Endothelial cell of umbilical vein (primary cell): ENCODE measurements at regions of chr10 and their contacts with region 1.

Region 1: DNA sequence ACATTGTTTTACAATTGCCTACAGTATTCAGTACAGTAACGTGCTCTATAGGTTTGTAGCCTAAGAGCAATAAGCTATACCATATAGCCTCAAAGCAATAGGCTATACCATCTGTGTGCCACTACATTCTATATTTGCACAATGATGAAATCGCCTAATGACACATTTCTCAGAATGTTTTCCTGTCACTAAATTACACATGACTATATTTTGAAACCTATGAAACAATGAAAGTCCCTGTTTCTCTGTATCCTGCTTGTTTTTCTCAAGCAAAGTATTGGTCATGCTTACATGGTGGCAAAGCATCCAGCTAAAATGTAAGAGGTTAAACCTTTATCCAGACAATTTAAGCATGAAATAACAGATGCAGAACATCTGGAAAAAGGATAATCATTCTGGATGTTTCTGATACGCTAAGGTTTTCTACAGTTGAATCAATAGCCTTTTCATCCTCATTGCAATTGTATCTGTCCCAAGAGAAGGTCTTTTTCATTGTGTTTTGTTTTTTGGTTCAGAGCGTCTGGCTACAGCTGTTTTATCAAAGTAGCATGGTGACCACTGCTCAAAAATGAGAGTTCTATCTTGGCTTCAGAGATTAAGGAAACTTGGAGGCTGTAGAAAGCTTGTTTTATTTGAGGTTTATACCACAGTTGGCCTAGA is 81.7 kb downstream of the CSTF2T start:
- DNase-seq: no peak
- H3K4me3 ChIP-seq: no peak overlapping the region
- H3K27ac ChIP-seq: no peak overlapping the region
- H3K4me1 ChIP-seq: peaks cover 11% of the 10 kb centered on the region
- H3K27me3 ChIP-seq: peaks cover 1 to 2% of the 10 kb centered on the region in 2 experiments
- CTCF ChIP-seq: no peak
- POLR2A ChIP-seq: no peak

Region 2: GRCh38 chr10:51642581-51642980 is 24.9 kb after region 1 on chr10:
- CTCF ChIA-PET with region 1: interaction called, 4 read pairs
- POLR2A ChIA-PET with region 1: no interaction called
- dilution Hi-C with region 1: no loop called
- intact Hi-C with region 1: loop called (anchors 2 kb)
- DNase-seq: no peak
- H3K4me3 ChIP-seq: no peak overlapping the region
- H3K27ac ChIP-seq: no peak overlapping the region
- H3K4me1 ChIP-seq: peaks cover 22% of the 10 kb centered on the region
- H3K27me3 ChIP-seq: peaks cover 7 to 8% of the 10 kb centered on the region in 2 experiments
- CTCF ChIP-seq: no peak
- POLR2A ChIP-seq: no peak

Region 3: GRCh38 chr10:51699475-51700227 is 81.9 kb after region 1 on chr10 and contains the start of gene CSTF2T:
- CTCF ChIA-PET with region 1: no interaction called
- POLR2A ChIA-PET with region 1: no interaction called
- dilution Hi-C with region 1: no loop called
- intact Hi-C with region 1: loop called (anchors 2 kb)
- DNase-seq: peak; percentile 93
- H3K4me3 ChIP-seq: peak within 1 kb of the TSS; percentile 18 to 75 (median 74)
- H3K27ac ChIP-seq: peak within 1 kb of the TSS; percentile 89
- H3K4me1 ChIP-seq: peaks cover 19% of the 10 kb centered on the region
- H3K27me3 ChIP-seq: peaks cover 1 to 2% of the 10 kb centered on the region in 2 experiments
- CTCF ChIP-seq: no peak
- POLR2A ChIP-seq: peak; percentile 83
- total RNA-seq, gene CSTF2T: 16.8 and 19.8 TPM in 2 replicates

Region 4: DNA sequence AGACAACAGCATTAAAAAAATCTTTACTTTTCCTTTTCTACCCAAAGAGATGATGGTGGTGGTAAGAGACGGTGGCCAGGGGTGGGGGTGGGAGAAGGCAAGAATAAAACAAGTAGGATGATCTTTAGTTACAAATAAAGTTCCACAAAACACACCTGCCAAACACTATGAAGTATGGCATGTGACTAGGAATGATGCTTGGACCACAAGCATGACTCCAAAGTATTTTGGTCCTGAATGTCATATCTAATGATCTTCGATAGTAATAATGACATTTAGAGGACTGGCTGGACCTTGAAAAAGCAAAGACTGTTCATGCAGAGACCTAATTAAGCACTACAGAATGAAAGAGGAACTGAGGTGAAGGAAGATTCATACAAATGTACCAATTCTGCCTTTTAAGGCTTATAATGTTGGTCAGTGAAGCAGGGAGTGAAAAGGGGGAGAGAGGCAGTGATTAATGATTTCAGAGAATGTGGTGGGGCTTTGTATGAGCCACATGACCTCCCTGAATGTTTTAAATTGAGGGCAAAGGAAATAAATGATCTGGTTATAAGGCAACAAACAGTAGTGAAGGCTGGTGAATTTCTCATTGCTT is 666.8 kb after region 1 on chr10:
- CTCF ChIA-PET with region 1: no interaction called
- POLR2A ChIA-PET with region 1: no interaction called
- dilution Hi-C with region 1: no loop called
- intact Hi-C with region 1: no loop called
- DNase-seq: no peak
- H3K4me3 ChIP-seq: no peak overlapping the region
- H3K27ac ChIP-seq: no peak overlapping the region
- H3K4me1 ChIP-seq: peaks cover 10% of the 10 kb centered on the region
- H3K27me3 ChIP-seq: no peaks in the 10 kb centered on the region
- CTCF ChIP-seq: no peak
- POLR2A ChIP-seq: no peak